Vagina (tissue), 2 donors: ENCODE measurements at regions of chr1 and their contacts with region 1.

Region 1: GRCh38 chr1:203273206-203273868 is 32.0 kb upstream of the BTG2 start:
- DNase-seq: peak; percentile 95 to 97
- H3K4me3 ChIP-seq: peak overlapping the region; percentile 18 to 23
- H3K27ac ChIP-seq: peak overlapping the region; percentile 81
- H3K4me1 ChIP-seq: peaks cover 55% of the 10 kb centered on the region
- H3K27me3 ChIP-seq: no peaks in the 10 kb centered on the region
- CTCF ChIP-seq: peak; percentile 88 to 99 (median 99)
- POLR2A ChIP-seq: no peak

Region 2: DNA sequence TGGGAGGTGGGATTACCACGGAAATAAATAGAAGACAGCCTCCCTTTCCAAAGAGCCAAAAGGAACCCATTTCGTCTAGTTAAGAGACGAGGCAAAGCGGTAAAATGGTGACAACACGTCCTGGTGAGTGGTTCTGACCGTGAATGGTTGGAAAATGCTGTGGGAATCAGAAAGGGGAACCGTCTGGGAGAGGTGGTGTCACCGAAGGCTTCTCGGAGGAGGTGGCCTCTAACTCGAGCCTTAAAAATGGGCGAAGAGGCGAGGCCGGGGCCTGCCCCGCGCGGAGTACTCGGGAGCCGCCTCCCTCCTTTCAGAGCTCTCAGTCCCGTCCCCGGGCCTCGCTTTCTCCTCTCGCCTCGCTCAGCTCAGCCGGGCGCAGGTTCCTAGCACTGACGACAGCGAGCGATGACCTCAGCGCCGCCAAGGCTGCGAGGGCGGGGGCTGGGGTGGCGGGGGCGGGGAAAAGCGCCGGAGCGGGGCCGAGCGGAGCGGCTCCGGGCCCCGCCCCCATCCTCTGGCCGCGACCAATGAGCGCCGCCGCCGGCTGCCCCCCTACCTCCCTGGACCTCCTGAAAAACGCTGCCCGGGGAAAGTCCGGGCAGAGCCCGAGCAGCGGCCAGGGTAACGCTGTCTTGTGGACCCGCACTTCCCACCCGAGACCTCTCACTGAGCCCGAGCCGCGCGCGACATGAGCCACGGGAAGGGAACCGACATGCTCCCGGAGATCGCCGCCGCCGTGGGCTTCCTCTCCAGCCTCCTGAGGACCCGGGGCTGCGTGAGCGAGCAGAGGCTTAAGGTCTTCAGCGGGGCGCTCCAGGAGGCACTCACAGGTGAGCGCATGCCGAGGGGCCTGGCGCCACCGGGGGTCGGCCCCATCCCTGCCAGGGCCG is 31.8 kb after region 1 on chr1 and contains the start of gene BTG2:
- intact Hi-C with region 1: loop called (anchors 5 kb)
- DNase-seq: peak in 1 of 2 donors; percentile 96
- H3K4me3 ChIP-seq: peak within 1 kb of the TSS; percentile 96 to 100
- H3K27ac ChIP-seq: peak within 1 kb of the TSS; percentile 100
- H3K4me1 ChIP-seq: peaks cover 52% of the 10 kb centered on the region
- H3K27me3 ChIP-seq: no peaks in the 10 kb centered on the region
- CTCF ChIP-seq: no peak
- POLR2A ChIP-seq: peak; percentile 79 to 100
- total RNA-seq, gene BTG2: 191 TPM

Region 3: DNA sequence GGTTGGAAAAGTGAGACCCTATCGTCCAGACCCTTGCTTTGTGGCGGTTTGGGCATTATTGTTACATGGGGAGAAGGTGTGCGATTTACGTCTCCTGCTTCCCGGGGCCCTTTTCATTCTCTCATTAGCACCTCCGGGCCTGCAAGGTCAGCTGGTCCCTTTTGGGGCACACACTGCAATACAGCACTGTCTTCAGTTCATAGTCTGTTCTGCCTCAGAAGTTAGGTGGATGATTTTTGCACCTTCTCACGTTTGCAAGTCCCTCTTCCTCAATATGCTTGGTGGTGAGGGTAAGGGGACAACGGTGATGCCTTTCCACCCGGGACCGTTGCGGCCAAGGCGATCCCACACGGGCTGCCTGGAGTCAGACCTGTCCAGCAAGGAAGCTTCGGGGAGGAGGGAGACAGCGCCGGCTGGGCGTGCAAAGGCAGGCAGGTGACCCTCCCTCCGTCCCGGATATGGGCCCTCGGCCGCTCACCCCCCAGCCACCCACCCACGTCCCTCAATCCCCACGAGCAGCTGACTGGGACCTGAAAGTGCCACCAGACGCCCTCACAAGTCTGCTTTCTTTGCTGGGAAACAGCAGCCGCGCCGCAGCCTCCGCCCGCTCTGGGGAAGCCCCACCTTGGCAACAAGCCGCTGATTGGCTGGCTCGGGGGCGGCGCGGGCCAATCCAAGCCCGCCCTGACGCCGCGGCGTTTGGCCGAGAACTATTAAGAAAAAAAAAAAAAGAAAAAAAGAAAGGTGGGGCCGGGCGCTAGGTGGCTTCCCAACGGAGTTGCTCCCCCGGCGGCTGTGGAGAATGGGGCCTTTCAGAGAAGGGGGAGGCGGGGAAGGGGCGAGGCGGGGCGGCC is 53.7 kb after region 1 on chr1:
- intact Hi-C with region 1: loop called (anchors 5 kb)
- DNase-seq: no peak
- H3K4me3 ChIP-seq: peak overlapping the region; percentile 45 to 62
- H3K27ac ChIP-seq: peak overlapping the region; percentile 89
- H3K4me1 ChIP-seq: peaks cover 58% of the 10 kb centered on the region
- H3K27me3 ChIP-seq: no peaks in the 10 kb centered on the region
- CTCF ChIP-seq: no peak
- POLR2A ChIP-seq: peak in 1 of 2 donors; percentile 53

Region 4: GRCh38 chr1:203465948-203466347 is 192.6 kb after region 1 on chr1:
- intact Hi-C with region 1: loop called (anchors 5 kb)
- DNase-seq: no peak
- H3K4me3 ChIP-seq: no peak overlapping the region
- H3K27ac ChIP-seq: peak overlapping the region; percentile 95
- H3K4me1 ChIP-seq: peaks cover 41% of the 10 kb centered on the region
- H3K27me3 ChIP-seq: no peaks in the 10 kb centered on the region
- CTCF ChIP-seq: no peak
- POLR2A ChIP-seq: no peak